Activated naive CD4-positive, alpha-beta T cell treated with anti-CD3 and anti-CD28 coated beads for 36 hours (primary cell): ENCODE measurements at regions of chr6 and their contacts with region 1.

Region 1: GRCh38 chr6:7276199-7276524 is 36.8 kb downstream of the SSR1 start:
- DNase-seq: no peak
- H3K4me3 Mint-ChIP-seq: no peak overlapping the region
- H3K27ac Mint-ChIP-seq: no peak overlapping the region
- H3K4me1 Mint-ChIP-seq: peaks cover 4% of the 10 kb centered on the region
- H3K27me3 Mint-ChIP-seq: no peaks in the 10 kb centered on the region

Region 2: DNA sequence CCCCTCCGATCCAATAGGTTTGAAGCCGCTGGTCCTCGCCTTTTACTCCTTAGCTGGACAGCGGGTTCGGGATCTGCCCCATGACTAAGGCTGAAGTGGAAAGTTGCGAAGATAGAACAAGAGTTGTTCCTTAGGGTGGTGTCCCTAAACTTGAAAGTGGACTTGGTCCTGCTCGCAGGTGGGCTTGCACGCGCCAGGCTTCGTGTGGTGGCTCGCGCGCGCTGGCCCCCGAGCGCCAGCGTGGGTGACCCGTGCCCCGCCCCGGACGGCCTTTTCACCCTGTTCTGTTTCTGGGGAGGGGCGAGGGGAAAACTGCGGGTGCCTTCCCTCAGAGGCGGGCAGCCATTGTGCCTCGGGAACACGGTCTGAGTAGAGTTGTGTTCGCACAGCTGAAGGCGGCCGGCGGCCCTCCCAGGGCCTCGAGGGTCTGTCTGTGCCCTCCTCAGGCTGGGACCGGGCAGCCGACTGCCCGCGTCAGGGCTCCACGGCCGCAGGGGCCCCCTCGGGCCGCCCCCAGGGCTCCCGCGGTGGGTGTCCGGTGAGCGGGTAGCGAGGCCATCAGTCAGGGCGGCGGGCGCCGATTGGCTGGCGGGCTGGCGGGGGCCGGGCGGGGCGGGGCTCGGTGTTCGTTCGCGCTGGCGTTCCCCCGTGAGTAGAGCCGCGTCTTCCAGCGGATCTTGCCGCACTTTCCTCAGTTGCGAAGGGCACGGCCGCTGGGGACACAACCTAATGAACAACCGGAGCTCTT is 135.4 kb before region 1 on chr6:
- CTCF ChIA-PET with region 1: no interaction called
- intact Hi-C with region 1: no loop called
- DNase-seq: peak; percentile 87
- H3K4me3 Mint-ChIP-seq: peak overlapping the region; percentile 80
- H3K27ac Mint-ChIP-seq: peak overlapping the region; percentile 81
- H3K4me1 Mint-ChIP-seq: peaks cover 80% of the 10 kb centered on the region
- H3K27me3 Mint-ChIP-seq: no peaks in the 10 kb centered on the region

Region 3: DNA sequence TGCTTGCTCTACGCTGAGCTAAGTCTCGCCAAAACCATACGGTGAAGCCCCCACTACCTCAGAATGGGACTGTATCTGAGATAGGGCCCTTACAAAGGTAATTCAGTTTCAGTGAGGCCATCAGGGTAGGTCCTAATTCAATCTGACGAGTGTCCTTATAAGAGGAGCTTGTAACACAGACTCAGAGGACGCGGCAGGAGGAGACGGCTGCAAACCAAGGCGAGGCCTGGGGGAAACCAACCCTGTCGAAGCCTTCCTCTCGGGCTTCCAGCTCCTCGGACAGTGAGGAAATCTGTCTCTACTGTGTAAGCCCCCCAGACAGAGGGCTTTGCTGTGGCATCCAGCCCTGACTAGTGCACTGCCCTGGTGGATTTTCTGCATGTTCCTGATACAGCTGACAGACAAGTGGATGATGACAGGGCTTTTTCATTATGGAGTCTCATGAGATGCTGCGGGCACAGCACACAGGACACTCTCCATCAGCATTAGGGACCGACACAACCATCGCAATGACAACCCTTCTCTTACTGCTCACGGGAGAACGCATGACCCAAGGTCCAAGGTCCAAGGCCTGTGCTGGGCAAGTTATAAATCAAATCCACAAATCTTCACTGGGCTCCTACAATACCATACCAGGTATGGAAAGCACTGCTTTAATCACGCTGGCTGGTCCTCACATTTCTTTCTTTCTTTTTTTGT is 11.3 kb before region 1 on chr6:
- CTCF ChIA-PET with region 1: interaction called, 24 read pairs
- intact Hi-C with region 1: no loop called
- DNase-seq: no peak
- H3K4me3 Mint-ChIP-seq: no peak overlapping the region
- H3K27ac Mint-ChIP-seq: no peak overlapping the region
- H3K4me1 Mint-ChIP-seq: peaks cover 15% of the 10 kb centered on the region
- H3K27me3 Mint-ChIP-seq: peaks cover 8% of the 10 kb centered on the region

Region 4: DNA sequence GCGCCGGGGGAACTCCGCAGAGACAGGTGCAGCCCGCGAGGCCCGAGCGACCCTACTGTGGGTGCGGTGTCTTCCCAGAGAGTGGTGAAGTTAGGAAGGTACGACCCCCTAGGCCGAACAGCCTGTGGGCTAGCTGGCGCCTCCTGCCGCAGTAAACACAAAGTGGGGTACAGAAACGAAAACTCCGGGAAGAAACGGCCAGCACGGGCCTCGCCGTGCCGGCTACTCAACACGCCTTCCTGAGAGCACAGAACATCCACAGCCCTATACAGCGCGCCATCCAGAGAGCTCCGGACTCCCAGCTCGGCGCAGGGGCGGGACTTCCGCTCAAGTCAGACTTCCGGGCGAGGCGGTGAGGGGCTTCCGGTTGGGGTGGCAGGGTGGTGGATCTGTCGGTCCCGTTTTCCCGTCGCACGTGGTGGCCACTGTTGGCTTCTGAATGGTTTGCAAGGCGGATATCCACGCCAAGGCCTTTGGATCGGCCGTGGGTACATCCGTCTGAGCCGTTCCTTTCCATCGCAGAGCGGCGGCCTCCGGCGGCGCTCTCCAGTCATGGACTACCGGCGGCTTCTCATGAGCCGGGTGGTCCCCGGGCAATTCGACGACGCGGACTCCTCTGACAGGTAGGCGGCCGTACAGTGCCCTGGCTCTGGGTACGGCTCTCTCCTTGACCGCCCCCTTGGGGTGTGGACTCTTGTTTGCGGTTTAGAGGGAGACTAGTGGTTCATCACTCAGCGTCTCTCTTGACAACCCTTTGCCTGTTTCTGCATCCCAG is 113.5 kb after region 1 on chr6 and contains the starts of genes CAGE1 and RIOK1:
- CTCF ChIA-PET with region 1: interaction called, 25 read pairs
- intact Hi-C with region 1: loop called (anchors 1 kb)
- DNase-seq: peak; percentile 97
- H3K4me3 Mint-ChIP-seq: peak within 1 kb of the TSS; percentile 94
- H3K27ac Mint-ChIP-seq: peak within 1 kb of the TSS; percentile 97
- H3K4me1 Mint-ChIP-seq: peaks cover 40% of the 10 kb centered on the region
- H3K27me3 Mint-ChIP-seq: no peaks in the 10 kb centered on the region
- total RNA-seq, gene CAGE1: 0.25 to 0.26 TPM
- total RNA-seq, gene RIOK1: 33.8 to 38.5 TPM

Region 5: DNA sequence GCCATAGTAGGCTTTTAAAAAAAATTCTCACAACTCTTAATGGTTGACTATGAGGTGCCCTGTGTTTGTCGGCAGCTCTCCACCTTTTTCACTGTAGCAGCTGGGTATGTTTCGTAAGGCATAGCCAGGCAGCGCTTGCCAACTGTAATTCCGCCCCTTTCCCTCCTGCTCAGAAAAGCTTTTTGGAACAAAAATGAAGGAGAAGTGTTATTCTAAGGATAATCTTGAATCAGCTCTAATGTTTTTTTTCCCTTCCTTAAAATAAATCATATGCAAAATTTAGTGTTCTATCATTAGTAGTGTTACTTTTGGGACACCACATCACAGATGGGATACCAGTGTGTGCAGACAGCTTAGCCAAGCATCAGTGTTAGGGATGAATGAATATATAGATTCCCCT is 134.7 kb after region 1 on chr6:
- CTCF ChIA-PET with region 1: interaction called, 10 read pairs
- intact Hi-C with region 1: no loop called
- DNase-seq: no peak
- H3K4me3 Mint-ChIP-seq: no peak overlapping the region
- H3K27ac Mint-ChIP-seq: no peak overlapping the region
- H3K4me1 Mint-ChIP-seq: peaks cover 4% of the 10 kb centered on the region
- H3K27me3 Mint-ChIP-seq: no peaks in the 10 kb centered on the region

Region 6: DNA sequence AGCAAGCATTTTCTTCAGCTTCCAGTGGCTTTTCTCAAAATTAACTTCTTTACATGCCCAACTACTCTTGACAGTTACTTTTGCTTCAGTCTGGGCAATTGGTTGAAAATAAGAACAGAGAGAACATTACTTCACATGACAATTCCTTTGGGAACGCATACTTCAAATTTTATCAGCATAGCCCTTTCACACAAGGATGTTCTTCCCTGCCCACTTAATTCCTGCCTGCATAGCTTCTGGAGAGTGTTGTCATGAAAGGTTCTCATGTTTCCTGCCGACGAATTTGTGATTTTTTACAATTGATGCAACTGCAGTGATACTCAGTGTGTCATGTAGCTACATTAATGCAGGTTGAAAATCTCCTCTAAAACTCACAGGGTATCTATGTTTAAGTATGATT is 291.9 kb after region 1 on chr6:
- CTCF ChIA-PET with region 1: no interaction called
- intact Hi-C with region 1: no loop called
- DNase-seq: no peak
- H3K4me3 Mint-ChIP-seq: no peak overlapping the region
- H3K27ac Mint-ChIP-seq: no peak overlapping the region
- H3K4me1 Mint-ChIP-seq: no peaks in the 10 kb centered on the region
- H3K27me3 Mint-ChIP-seq: peaks cover 28% of the 10 kb centered on the region

Region 7: DNA sequence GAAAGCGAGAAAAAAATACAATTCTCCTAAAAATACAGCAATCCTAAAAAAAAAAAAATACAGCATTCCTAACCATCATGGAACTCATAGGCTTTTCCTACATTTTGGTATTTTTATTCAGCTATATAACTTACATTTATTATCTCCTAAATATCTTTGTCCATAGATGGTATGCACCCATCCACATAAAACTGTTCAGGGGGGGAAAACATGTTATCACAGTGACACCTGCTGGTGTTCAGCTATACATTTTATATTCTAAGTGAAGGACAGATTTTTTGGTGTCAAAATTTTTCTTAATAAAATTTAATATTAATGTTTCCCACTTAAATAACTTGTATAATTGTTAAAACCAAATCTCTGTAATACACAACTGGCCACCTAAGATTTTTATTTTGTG is 730.0 kb after region 1 on chr6:
- CTCF ChIA-PET with region 1: no interaction called
- intact Hi-C with region 1: loop called (anchors 1 kb)
- DNase-seq: peak; percentile 25
- H3K4me3 Mint-ChIP-seq: no peak overlapping the region
- H3K27ac Mint-ChIP-seq: no peak overlapping the region
- H3K4me1 Mint-ChIP-seq: peaks cover 4% of the 10 kb centered on the region
- H3K27me3 Mint-ChIP-seq: no peaks in the 10 kb centered on the region